GM18951 (cell line): ENCODE measurements at regions of chr19 and their contacts with region 1.

Region 1: GRCh38 chr19:1304197-1304924 is 18.7 kb downstream of the EFNA2 start:
- POLR2A ChIP-seq: no peak

Region 2: GRCh38 chr19:1373534-1374249 is 69.3 kb after region 1 on chr19:
- in situ Hi-C with region 1: loop called (anchors 10 kb)
- POLR2A ChIP-seq: no peak